ENCODE measurements at regions of chr20 and their contacts with region 1.

Region 1: GRCh38 chr20:38893565-38894090 is 32.6 kb upstream of the FAM83D start:
- DNase-seq: peak; percentile 84
- ATAC-seq: peak; percentile 79
- H3K4me3 Mint-ChIP-seq: peak overlapping the region; percentile 29
- H3K27ac Mint-ChIP-seq: peak overlapping the region; percentile 85
- H3K4me1 Mint-ChIP-seq: peaks cover 52% of the 10 kb centered on the region
- H3K27me3 Mint-ChIP-seq: no peaks in the 10 kb centered on the region
- CTCF ChIP-seq: peak; percentile 94

Region 2: DNA sequence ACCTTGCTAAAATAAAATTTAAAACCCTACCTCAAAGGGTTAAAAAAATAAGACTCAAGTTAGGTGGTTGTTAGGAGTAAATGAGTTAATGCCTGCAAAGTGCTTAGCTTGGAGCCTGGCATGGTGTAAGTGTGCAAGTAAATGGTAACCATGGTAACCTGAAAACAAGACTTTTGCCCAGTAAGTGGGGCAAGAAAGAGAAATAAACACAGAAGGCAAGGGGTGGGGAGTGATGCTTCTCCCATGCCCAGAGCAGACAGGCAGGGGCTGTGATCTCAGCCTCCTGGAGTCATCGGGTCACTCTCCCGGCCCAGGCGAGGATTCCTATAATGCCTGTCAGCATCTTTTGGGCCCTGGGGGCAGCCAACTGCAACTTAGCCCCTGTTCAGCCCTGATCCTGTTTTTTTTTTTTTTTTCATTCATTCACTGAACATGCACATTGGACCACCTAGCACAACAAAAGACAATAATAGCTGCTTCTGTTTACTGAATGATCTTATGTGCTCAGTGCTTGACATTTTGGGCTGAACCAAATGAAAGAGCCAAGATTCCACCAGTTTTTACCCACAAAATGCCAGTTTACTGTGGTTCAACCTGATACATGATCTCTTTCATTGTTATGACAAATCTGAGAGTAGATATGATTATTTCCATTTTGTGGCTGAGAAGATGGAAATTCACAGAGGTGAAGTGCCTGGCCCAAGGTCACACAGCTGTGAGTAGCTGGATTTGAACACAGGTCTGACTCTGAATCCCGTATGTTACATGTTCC is 228.3 kb before region 1 on chr20:
- CTCF ChIA-PET with region 1: no interaction called
- POLR2A ChIA-PET with region 1: no interaction called
- intact Hi-C with region 1: loop called (anchors 10 kb)
- DNase-seq: no peak
- ATAC-seq: no peak
- H3K4me3 Mint-ChIP-seq: no peak overlapping the region
- H3K27ac Mint-ChIP-seq: no peak overlapping the region
- H3K4me1 Mint-ChIP-seq: peaks cover 3% of the 10 kb centered on the region
- H3K27me3 Mint-ChIP-seq: peaks cover 36% of the 10 kb centered on the region
- CTCF ChIP-seq: no peak

Region 3: GRCh38 chr20:38730989-38731737 is 162.5 kb before region 1 on chr20:
- CTCF ChIA-PET with region 1: interaction called, 20 read pairs
- POLR2A ChIA-PET with region 1: no interaction called
- intact Hi-C with region 1: no loop called
- DNase-seq: peak; percentile 86
- ATAC-seq: peak; percentile 77
- H3K4me3 Mint-ChIP-seq: peak overlapping the region; percentile 55
- H3K27ac Mint-ChIP-seq: no peak overlapping the region
- H3K4me1 Mint-ChIP-seq: peaks cover 44% of the 10 kb centered on the region
- H3K27me3 Mint-ChIP-seq: peaks cover 87% of the 10 kb centered on the region
- CTCF ChIP-seq: peak; percentile 99

Region 4: DNA sequence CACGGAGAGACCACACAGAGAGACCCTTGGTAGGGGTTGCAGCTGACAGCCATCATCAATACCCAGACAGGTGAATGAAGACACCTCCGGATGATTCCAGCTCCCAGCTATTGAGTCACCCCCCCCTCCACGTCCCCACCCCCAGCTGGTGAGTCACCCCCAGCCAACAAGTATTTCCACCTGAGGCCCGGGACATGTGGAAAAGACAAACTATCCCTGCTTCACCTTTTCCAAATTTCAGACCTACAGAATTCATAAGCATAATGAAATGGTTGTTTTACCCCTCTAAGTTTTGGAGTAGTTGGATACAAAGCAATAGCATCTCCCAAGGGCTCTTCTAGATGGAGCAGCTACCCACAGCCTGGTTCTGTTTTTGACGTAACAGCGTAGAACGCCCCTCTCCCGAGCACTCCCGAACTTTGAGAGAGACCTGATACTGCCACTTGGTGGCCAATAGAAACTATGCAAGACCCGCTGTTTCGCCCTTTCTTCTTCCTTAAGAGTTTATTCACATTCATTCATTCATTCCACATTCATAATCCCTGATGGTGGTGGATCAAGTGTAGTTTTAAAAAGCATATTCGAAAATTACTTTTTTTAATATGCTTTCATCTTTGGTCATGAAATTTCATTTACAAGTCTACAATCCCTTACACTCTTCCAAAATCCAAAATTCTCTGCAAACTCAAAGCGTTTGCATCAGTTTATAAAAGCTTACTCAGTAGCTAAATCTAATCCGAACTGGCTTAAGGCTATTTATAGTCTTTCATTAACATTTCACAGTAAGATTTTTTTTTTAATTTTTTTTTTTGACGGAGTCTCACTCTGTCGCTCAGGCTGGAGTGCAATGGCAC is 103.2 kb before region 1 on chr20:
- CTCF ChIA-PET with region 1: interaction called, 16 read pairs
- POLR2A ChIA-PET with region 1: no interaction called
- intact Hi-C with region 1: no loop called
- DNase-seq: peak; percentile 65
- ATAC-seq: peak; percentile 74
- H3K4me3 Mint-ChIP-seq: no peak overlapping the region
- H3K27ac Mint-ChIP-seq: no peak overlapping the region
- H3K4me1 Mint-ChIP-seq: peaks cover 17% of the 10 kb centered on the region
- H3K27me3 Mint-ChIP-seq: no peaks in the 10 kb centered on the region
- CTCF ChIP-seq: peak; percentile 72

Region 5: DNA sequence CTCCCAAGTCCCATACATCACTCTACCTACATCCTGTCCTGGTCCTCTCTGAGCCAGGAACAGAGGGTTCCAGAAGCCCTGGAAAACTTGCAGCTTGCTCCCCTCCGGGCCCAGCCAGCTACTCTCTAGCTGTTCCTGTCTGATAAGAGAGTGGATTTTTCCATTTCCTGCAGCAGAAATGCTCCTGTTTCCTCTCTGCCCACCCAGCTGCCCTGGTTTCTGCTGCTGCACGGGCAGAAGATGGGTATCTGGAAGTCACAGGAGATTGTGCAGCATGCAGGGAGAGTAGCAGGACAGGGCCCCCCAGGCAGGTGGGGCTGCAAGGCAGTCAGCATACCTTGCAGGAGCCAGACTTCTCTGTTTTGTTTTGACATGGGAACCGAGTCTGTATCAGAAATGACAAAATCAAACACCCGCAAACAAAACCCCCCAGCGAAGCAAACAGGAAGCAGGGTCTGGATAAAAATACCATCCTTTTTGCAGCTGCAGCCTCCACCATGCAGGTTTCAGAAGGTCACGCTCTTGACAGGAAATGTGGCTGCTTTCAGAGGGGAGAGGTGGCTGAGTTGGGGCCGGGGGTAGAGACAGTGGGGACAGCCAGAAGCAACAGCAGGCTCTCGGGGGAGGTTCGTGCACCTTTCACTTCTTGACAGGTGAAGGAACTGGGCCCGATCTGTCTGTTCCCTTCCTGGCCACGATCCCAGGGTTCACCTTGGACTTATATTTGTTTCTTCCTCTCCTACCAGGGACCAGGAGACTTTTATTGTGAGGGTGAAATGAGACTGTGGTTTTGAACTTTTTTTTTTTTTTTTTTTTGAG is 18.2 kb before region 1 on chr20:
- CTCF ChIA-PET with region 1: interaction called, 21 read pairs
- POLR2A ChIA-PET with region 1: interaction called, 5 read pairs
- intact Hi-C with region 1: loop called (anchors 2 kb)
- DNase-seq: peak; percentile 84
- ATAC-seq: peak; percentile 29
- H3K4me3 Mint-ChIP-seq: peak overlapping the region; percentile 67
- H3K27ac Mint-ChIP-seq: peak overlapping the region; percentile 96
- H3K4me1 Mint-ChIP-seq: peaks cover 89% of the 10 kb centered on the region
- H3K27me3 Mint-ChIP-seq: no peaks in the 10 kb centered on the region
- CTCF ChIP-seq: no peak

Region 6: DNA sequence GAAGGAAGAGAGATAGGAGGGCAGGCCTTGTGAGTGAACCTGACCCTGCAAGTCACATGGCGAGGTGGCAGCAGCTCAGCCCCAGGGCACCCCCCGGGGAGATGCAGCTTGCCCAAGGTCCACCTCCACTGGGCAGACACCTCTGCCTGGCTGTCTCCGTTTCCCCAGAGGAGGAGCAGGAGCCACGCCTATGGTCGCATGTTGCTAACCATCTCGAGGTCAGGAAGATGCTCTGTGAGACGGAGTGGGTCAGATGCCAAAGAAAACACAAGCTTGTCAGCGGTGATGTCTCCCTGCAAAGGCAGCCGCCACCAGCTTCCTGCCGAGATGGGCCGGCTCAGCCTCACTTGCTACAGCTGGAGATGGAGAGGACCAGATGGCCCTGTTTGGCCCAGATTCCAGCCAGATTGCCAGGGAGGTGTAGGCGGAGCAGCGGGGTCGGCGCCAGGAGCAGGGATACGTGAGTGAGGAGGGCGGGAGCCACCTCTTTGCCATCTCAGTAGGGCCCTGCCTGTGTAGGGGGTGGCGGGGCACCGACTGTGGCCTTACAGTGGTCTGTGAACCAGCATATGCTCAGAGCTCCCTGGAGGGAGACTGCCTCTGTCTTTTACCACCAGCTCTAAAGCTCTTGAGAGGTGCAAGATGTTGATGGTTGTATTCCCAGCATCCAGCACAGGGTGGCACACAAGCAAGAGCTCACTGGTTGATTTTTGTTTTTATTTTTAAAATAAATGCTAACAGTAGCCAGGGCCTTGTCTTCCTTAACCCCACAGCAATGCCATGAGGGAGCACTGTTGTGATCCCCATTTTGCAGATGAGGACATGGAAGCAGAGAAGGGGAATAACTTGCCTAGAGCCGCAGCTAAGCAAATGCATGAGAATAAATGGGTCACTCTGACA is 10.3 kb before region 1 on chr20:
- CTCF ChIA-PET with region 1: interaction called, 22 read pairs
- POLR2A ChIA-PET with region 1: interaction called, 17 read pairs
- intact Hi-C with region 1: no loop called
- DNase-seq: no peak
- ATAC-seq: peak; percentile 17
- H3K4me3 Mint-ChIP-seq: no peak overlapping the region
- H3K27ac Mint-ChIP-seq: peak overlapping the region; percentile 75
- H3K4me1 Mint-ChIP-seq: peaks cover 58% of the 10 kb centered on the region
- H3K27me3 Mint-ChIP-seq: no peaks in the 10 kb centered on the region
- CTCF ChIP-seq: no peak

Region 7: GRCh38 chr20:39152126-39152525 is 258.5 kb after region 1 on chr20:
- CTCF ChIA-PET with region 1: no interaction called
- POLR2A ChIA-PET with region 1: no interaction called
- intact Hi-C with region 1: no loop called
- DNase-seq: no peak
- ATAC-seq: no peak
- H3K4me3 Mint-ChIP-seq: no peak overlapping the region
- H3K27ac Mint-ChIP-seq: no peak overlapping the region
- H3K4me1 Mint-ChIP-seq: no peaks in the 10 kb centered on the region
- H3K27me3 Mint-ChIP-seq: peaks cover 10% of the 10 kb centered on the region
- CTCF ChIP-seq: no peak